ENCODE measurements at regions of chr10 and their contacts with region 1.

Region 1: GRCh38 chr10:45464958-45465567 is 91.0 kb downstream of the ALOX5 start:
- DNase-seq: peak in 1 of 2 experiments; percentile 69
- H3K4me3 ChIP-seq: no peak overlapping the region
- H3K27ac ChIP-seq: no peak overlapping the region
- H3K4me1 ChIP-seq: no peaks in the 10 kb centered on the region
- H3K27me3 ChIP-seq: no peaks in the 10 kb centered on the region
- CTCF ChIP-seq: peak; percentile 94

Region 2: GRCh38 chr10:45008524-45009161 is 456.4 kb before region 1 on chr10:
- CTCF ChIA-PET with region 1: no interaction called
- POLR2A ChIA-PET with region 1: no interaction called
- intact Hi-C with region 1: loop called (anchors 5 kb)
- DNase-seq: peak; percentile 54 to 84
- H3K4me3 ChIP-seq: no peak overlapping the region
- H3K27ac ChIP-seq: no peak overlapping the region
- H3K4me1 ChIP-seq: no peaks in the 10 kb centered on the region
- H3K27me3 ChIP-seq: no peaks in the 10 kb centered on the region
- CTCF ChIP-seq: peak; percentile 92

Region 3: DNA sequence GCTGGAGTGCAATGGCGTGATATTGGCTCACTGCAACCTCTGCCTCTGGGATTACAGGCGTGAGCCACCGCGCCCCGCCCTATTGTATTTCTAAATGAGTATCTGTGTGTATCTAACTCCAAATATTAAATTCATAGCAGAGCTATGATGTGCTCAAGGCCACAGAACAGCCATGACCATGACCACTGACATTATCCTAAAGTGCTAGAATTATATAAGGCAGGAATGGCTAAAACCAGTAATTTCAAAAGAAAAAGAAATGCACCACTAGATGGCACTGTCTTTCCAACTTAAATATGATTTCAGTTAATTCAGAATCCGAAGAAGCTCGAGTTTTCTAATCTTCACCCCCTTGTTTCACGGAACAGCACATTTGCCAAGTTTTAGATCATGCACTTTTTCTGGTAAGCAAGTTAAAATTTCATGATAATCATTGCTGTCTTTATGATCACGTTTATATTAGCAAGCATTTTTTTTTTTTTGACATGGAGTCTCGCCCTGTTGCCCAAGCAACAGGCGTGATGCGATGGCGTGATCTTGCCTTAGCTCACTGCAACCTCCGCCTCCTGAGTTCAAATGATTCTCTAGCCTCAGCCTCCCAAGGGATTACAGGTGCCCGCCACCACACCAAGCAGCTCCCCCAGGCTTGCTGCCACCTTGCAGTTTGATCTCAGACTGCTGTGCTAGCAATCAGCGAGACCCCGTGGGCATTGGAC is 214.9 kb before region 1 on chr10:
- CTCF ChIA-PET with region 1: interaction called, 16 read pairs
- POLR2A ChIA-PET with region 1: no interaction called
- intact Hi-C with region 1: loop called (anchors 2 kb)
- DNase-seq: peak; percentile 46 to 77
- H3K4me3 ChIP-seq: peak overlapping the region; percentile 48; the same call in 1 of the 2 replicates
- H3K27ac ChIP-seq: no peak overlapping the region
- H3K4me1 ChIP-seq: no peaks in the 10 kb centered on the region
- H3K27me3 ChIP-seq: no peaks in the 10 kb centered on the region
- CTCF ChIP-seq: peak; percentile 94

Region 4: GRCh38 chr10:45325116-45325515 is 139.9 kb before region 1 on chr10:
- CTCF ChIA-PET with region 1: no interaction called
- POLR2A ChIA-PET with region 1: no interaction called
- intact Hi-C with region 1: no loop called
- DNase-seq: no peak
- H3K4me3 ChIP-seq: no peak overlapping the region
- H3K27ac ChIP-seq: no peak overlapping the region
- H3K4me1 ChIP-seq: no peaks in the 10 kb centered on the region
- H3K27me3 ChIP-seq: no peaks in the 10 kb centered on the region
- CTCF ChIP-seq: no peak

Region 5: GRCh38 chr10:45594276-45595106 is 129.4 kb after region 1 on chr10:
- CTCF ChIA-PET with region 1: no interaction called
- POLR2A ChIA-PET with region 1: no interaction called
- intact Hi-C with region 1: loop called (anchors 5 kb)
- DNase-seq: peak; percentile 85 to 94
- H3K4me3 ChIP-seq: peak overlapping the region; percentile 63
- H3K27ac ChIP-seq: no peak overlapping the region
- H3K4me1 ChIP-seq: peaks cover 16% of the 10 kb centered on the region
- H3K27me3 ChIP-seq: no peaks in the 10 kb centered on the region
- CTCF ChIP-seq: no peak

Region 6: GRCh38 chr10:45672181-45673073 is 207.4 kb after region 1 on chr10 and contains the start of gene ZFAND4:
- CTCF ChIA-PET with region 1: no interaction called
- POLR2A ChIA-PET with region 1: no interaction called
- intact Hi-C with region 1: loop called (anchors 1 kb)
- DNase-seq: peak; percentile 88 to 97
- H3K4me3 ChIP-seq: peak within 1 kb of the TSS; percentile 70
- H3K27ac ChIP-seq: 0 out of 2 replicates have a peak within 1 kb of the TSS, but pooled peaks have one; percentile 7
- H3K4me1 ChIP-seq: peaks cover 8% of the 10 kb centered on the region; the same call in 1 of the 2 replicates
- H3K27me3 ChIP-seq: no peaks in the 10 kb centered on the region
- CTCF ChIP-seq: peak; percentile 52; the same call in 1 of the 2 replicates
- total RNA-seq, gene ZFAND4: 3.5 and 4.4 TPM in 2 replicates

Region 7: GRCh38 chr10:46022978-46023702 is 558.1 kb after region 1 on chr10:
- CTCF ChIA-PET with region 1: no interaction called
- POLR2A ChIA-PET with region 1: no interaction called
- intact Hi-C with region 1: loop called (anchors 10 kb)
- DNase-seq: peak; percentile 91 to 97
- H3K4me3 ChIP-seq: peak overlapping the region; percentile 71
- H3K27ac ChIP-seq: peak overlapping the region; percentile 93
- H3K4me1 ChIP-seq: peaks cover 41% of the 10 kb centered on the region
- H3K27me3 ChIP-seq: no peaks in the 10 kb centered on the region
- CTCF ChIP-seq: peak; percentile 43; the same call in 1 of the 2 replicates